Transverse colon (tissue), 4 donors: ENCODE measurements at regions of chr19 and their contacts with region 1.

Region 1: DNA sequence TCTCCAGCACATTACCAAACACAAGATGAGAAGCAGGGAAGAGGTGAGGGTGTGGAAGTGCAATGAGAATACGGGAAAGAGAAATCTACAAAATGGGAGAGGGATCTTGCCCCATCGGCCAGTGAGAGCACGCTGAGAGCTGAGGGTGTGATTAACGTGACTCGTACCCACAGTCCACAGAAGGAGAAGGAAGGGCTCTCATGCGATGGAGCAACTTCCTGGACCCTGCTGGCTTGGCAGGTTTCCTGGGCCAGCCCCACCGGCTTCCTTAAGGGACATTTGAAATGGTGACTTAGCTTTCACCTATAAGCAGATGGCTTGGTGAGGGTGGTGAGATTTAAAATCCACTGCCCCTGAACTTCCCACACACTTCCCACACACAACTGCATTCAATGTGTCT is 740.1 kb downstream of the UQCRFS1 start:
- DNase-seq: peak; percentile 26
- H3K4me3 ChIP-seq: no peak overlapping the region
- H3K27ac ChIP-seq: no peak overlapping the region
- H3K4me1 ChIP-seq: peaks cover 0 to 17% (median 12%) of the 10 kb centered on the region in 4 donors
- H3K27me3 ChIP-seq: no peaks in the 10 kb centered on the region
- CTCF ChIP-seq: no peak
- EP300 ChIP-seq: no peak
- POLR2A ChIP-seq: no peak

Region 2: GRCh38 chr19:28710278-28710677 is 237.4 kb after region 1 on chr19:
- in situ Hi-C with region 1: loop called in 2 of 4 experiments (anchors 10 kb)
- intact Hi-C with region 1: loop called (anchors 10 kb)
- DNase-seq: no peak
- H3K4me3 ChIP-seq: no peak overlapping the region
- H3K27ac ChIP-seq: no peak overlapping the region
- H3K4me1 ChIP-seq: no peaks in the 10 kb centered on the region
- H3K27me3 ChIP-seq: no peaks in the 10 kb centered on the region
- CTCF ChIP-seq: peak; percentile 61 to 66 (median 64)
- EP300 ChIP-seq: no peak
- POLR2A ChIP-seq: no peak

Region 3: GRCh38 chr19:28823338-28823961 is 350.6 kb after region 1 on chr19:
- in situ Hi-C with region 1: no loop called
- intact Hi-C with region 1: no loop called
- DNase-seq: no peak
- H3K4me3 ChIP-seq: no peak overlapping the region
- H3K27ac ChIP-seq: no peak overlapping the region
- H3K4me1 ChIP-seq: no peaks in the 10 kb centered on the region
- H3K27me3 ChIP-seq: no peaks in the 10 kb centered on the region
- CTCF ChIP-seq: no peak
- EP300 ChIP-seq: no peak
- POLR2A ChIP-seq: no peak